Dorsolateral prefrontal cortex (tissue), 120 donors: ENCODE measurements at regions of chr15 and their contacts with region 1.

Region 1: GRCh38 chr15:77001351-77001750 is 6.4 kb downstream of the PSTPIP1 start:
- DNase-seq: peak in 1 of 10 donors; percentile 35
- H3K4me3 ChIP-seq: no peak overlapping the region
- H3K27ac ChIP-seq: no peak overlapping the region
- H3K27me3 ChIP-seq: no peaks in the 10 kb centered on the region
- CTCF ChIP-seq: no peak

Region 2: GRCh38 chr15:77014132-77015081 is 13.1 kb after region 1 on chr15:
- intact Hi-C with region 1: loop called in 1 of 2 experiments (anchors 1 kb)
- DNase-seq: no peak
- H3K4me3 ChIP-seq: no peak overlapping the region
- H3K27ac ChIP-seq: peak overlapping the region in 3 of 59 donors; percentile 15 to 18 (median 17)
- H3K27me3 ChIP-seq: no peaks in the 10 kb centered on the region
- CTCF ChIP-seq: no peak